ENCODE measurements at regions of chr7 and their contacts with region 1.

Region 1: GRCh38 chr7:20304376-20304775 is 26.3 kb upstream of the ITGB8 start:
- DNase-seq: peak; percentile 70 to 87
- H3K4me3 ChIP-seq: no peak overlapping the region
- H3K4me3 Mint-ChIP-seq: no peak overlapping the region
- H3K27ac Mint-ChIP-seq: peak overlapping the region; percentile 35
- H3K4me1 ChIP-seq: peaks cover 40% of the 10 kb centered on the region
- H3K4me1 Mint-ChIP-seq: peaks cover 45% of the 10 kb centered on the region
- H3K27me3 ChIP-seq: no peaks in the 10 kb centered on the region
- H3K27me3 Mint-ChIP-seq: no peaks in the 10 kb centered on the region
- CTCF ChIP-seq: peak in 1 of 2 experiments; percentile 10

Region 2: GRCh38 chr7:20019757-20020432 is 284.5 kb before region 1 on chr7:
- CTCF ChIA-PET with region 1: no interaction called
- POLR2A ChIA-PET with region 1: no interaction called
- intact Hi-C with region 1: no loop called
- DNase-seq: no peak
- H3K4me3 ChIP-seq: no peak overlapping the region
- H3K4me3 Mint-ChIP-seq: no peak overlapping the region
- H3K27ac Mint-ChIP-seq: no peak overlapping the region
- H3K4me1 ChIP-seq: no peaks in the 10 kb centered on the region
- H3K4me1 Mint-ChIP-seq: peaks cover 13% of the 10 kb centered on the region
- H3K27me3 ChIP-seq: no peaks in the 10 kb centered on the region
- H3K27me3 Mint-ChIP-seq: no peaks in the 10 kb centered on the region
- CTCF ChIP-seq: no peak

Region 3: DNA sequence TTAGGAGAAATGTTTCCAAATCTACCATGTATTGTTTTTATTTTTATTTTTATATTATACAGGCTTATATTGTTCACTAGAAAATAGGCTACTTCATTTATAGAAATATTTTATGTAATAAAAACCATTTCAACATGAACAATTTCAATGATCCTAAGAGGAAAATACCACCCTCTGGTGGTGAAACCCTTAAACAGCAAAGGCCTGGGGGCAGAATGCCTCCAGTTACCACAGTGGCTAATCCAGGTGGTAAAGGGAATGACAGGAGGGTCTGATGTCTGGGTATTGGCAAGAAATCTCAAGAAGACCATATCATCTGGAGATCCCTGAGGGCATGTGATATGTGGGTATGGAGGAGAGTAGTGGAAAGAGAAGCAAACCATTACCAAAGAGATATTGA is 106.5 kb before region 1 on chr7:
- CTCF ChIA-PET with region 1: no interaction called
- POLR2A ChIA-PET with region 1: no interaction called
- intact Hi-C with region 1: loop called (anchors 1 kb)
- DNase-seq: no peak
- H3K4me3 ChIP-seq: no peak overlapping the region
- H3K4me3 Mint-ChIP-seq: no peak overlapping the region
- H3K27ac Mint-ChIP-seq: peak overlapping the region; percentile 76
- H3K4me1 ChIP-seq: peaks cover 66% of the 10 kb centered on the region
- H3K4me1 Mint-ChIP-seq: peaks cover 56% of the 10 kb centered on the region
- H3K27me3 ChIP-seq: no peaks in the 10 kb centered on the region
- H3K27me3 Mint-ChIP-seq: no peaks in the 10 kb centered on the region
- CTCF ChIP-seq: peak; percentile 30 to 52

Measured in Caco-2 (cell line).